HepG2 (cell line): ENCODE measurements at regions of chr3 and their contacts with region 1.

Region 1: DNA sequence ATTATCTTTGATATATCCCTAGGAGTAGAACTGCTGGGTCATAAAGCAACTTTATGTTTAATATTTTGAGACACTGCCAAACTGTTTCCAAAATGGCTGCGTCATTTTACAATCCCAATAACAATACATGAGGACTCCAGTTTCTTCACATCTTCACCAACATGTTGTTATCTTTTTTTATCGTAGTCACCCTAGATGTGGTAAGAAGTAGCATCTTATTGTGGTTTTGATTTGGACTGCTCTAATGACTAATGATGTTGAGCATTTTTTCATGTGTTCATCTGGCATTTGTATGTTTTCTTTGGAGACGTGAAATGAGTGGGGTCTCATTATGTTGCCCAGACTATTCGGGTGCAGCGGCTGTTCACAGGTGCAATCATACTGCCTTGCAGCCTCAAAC is 83.8 kb downstream of the MAP4 start:
- DNase-seq: no peak
- ATAC-seq: no peak
- H3K4me3 ChIP-seq: no peak overlapping the region
- H3K27ac ChIP-seq: no peak overlapping the region
- H3K4me1 ChIP-seq: no peaks in the 10 kb centered on the region
- H3K27me3 ChIP-seq: no peaks in the 10 kb centered on the region
- CTCF ChIP-seq: no peak
- EP300 ChIP-seq: no peak
- POLR2A ChIP-seq: no peak
- RAD21 ChIP-seq: no peak

Region 2: DNA sequence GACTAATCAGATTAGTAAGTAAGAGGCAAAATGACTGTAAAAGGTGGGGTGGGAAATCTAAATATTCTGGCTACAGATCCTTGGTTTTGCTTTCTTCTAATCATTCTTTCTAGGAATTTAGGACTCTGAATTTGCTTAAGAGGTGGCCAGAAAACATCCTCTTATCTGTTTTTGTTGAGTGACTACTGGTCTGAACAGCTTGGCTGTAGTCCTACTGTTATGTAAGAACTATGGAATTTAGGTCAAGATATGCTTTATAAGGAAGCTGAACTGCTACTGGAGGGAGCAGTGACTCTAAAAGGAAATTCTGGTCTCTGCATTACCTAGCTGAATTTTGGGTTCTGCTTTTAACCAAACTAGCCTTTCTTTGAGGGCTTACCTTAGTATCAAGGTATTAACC is 320.2 kb before region 1 on chr3:
- CTCF ChIA-PET with region 1: no interaction called
- POLR2A ChIA-PET with region 1: no interaction called
- in situ Hi-C with region 1: no loop called
- intact Hi-C with region 1: no loop called
- DNase-seq: no peak
- ATAC-seq: no peak
- H3K4me3 ChIP-seq: no peak overlapping the region
- H3K27ac ChIP-seq: no peak overlapping the region
- H3K4me1 ChIP-seq: no peaks in the 10 kb centered on the region
- H3K27me3 ChIP-seq: no peaks in the 10 kb centered on the region
- CTCF ChIP-seq: no peak
- EP300 ChIP-seq: no peak
- POLR2A ChIP-seq: no peak
- RAD21 ChIP-seq: no peak

Region 3: GRCh38 chr3:48135552-48136495 is 203.4 kb after region 1 on chr3:
- CTCF ChIA-PET with region 1: no interaction called
- POLR2A ChIA-PET with region 1: no interaction called
- in situ Hi-C with region 1: no loop called
- intact Hi-C with region 1: loop called (anchors 5 kb)
- DNase-seq: peak; percentile 77
- ATAC-seq: peak; percentile 93
- H3K4me3 ChIP-seq: peak overlapping the region in 1 of 3 experiments; percentile 38; a peak in 2 of 6 replicates
- H3K27ac ChIP-seq: peak overlapping the region; percentile 63
- H3K4me1 ChIP-seq: peaks cover 32% of the 10 kb centered on the region
- H3K27me3 ChIP-seq: no peaks in the 10 kb centered on the region
- CTCF ChIP-seq: no peak
- EP300 ChIP-seq: peak in 1 of 2 experiments; percentile 39; a peak in 1 of 4 replicates
- POLR2A ChIP-seq: no peak
- RAD21 ChIP-seq: no peak